CD8-positive, alpha-beta memory T cell (primary cell): ENCODE measurements at regions of chr17 and their contacts with region 1.

Region 1: GRCh38 chr17:34961093-34961911 is at the starts of genes CCT6B and ZNF830:
- DNase-seq: peak; percentile 82 to 94 (median 90)
- H3K4me3 ChIP-seq: peak within 1 kb of the TSS; percentile 92
- H3K4me3 Mint-ChIP-seq: peak within 1 kb of the TSS; percentile 96 to 100 (median 100)
- H3K27ac ChIP-seq: peak within 1 kb of the TSS; percentile 91
- H3K27ac Mint-ChIP-seq: peak within 1 kb of the TSS; percentile 94 to 100 (median 100)
- H3K4me1 ChIP-seq: peaks cover 23% of the 10 kb centered on the region
- H3K4me1 Mint-ChIP-seq: peaks cover 27 to 41% (median 41%) of the 10 kb centered on the region in 3 donors
- H3K27me3 ChIP-seq: no peaks in the 10 kb centered on the region
- H3K27me3 Mint-ChIP-seq: peaks cover 6 to 8% of the 10 kb centered on the region in 2 donors
- total RNA-seq, gene CCT6B: 0.90 to 1.8 TPM
- total RNA-seq, gene ZNF830: 22.7 to 26.7 TPM

Region 2: GRCh38 chr17:34980681-34981537 is 19.6 kb after region 1 on chr17:
- CTCF ChIA-PET with region 1: interaction called, 3 read pairs
- POLR2A ChIA-PET with region 1: interaction called, 12 read pairs
- DNase-seq: peak; percentile 69 to 82 (median 75)
- H3K4me3 ChIP-seq: peak overlapping the region; percentile 76
- H3K4me3 Mint-ChIP-seq: peak overlapping the region; percentile 94 to 99 (median 96)
- H3K27ac ChIP-seq: peak overlapping the region; percentile 94
- H3K27ac Mint-ChIP-seq: peak overlapping the region; percentile 92 to 99 (median 98)
- H3K4me1 ChIP-seq: peaks cover 48% of the 10 kb centered on the region
- H3K4me1 Mint-ChIP-seq: peaks cover 44 to 61% (median 52%) of the 10 kb centered on the region in 3 donors
- H3K27me3 ChIP-seq: no peaks in the 10 kb centered on the region
- H3K27me3 Mint-ChIP-seq: no peaks in the 10 kb centered on the region